BJ (cell line): ENCODE measurements at regions of chr12 and their contacts with region 1.

Region 1: GRCh38 chr12:110301065-110301806 is 20.2 kb downstream of the ATP2A2 start:
- DNase-seq: no peak
- H3K4me3 ChIP-seq: no peak overlapping the region
- H3K27me3 ChIP-seq: no peaks in the 10 kb centered on the region
- CTCF ChIP-seq: no peak

Region 2: GRCh38 chr12:110286623-110287022 is 14.6 kb before region 1 on chr12:
- CTCF ChIA-PET with region 1: interaction called, 3 read pairs
- POLR2A ChIA-PET with region 1: interaction called, 14 read pairs
- DNase-seq: no peak
- H3K4me3 ChIP-seq: no peak overlapping the region
- H3K27me3 ChIP-seq: no peaks in the 10 kb centered on the region
- CTCF ChIP-seq: no peak

Region 3: GRCh38 chr12:111010061-111010460 is 708.8 kb after region 1 on chr12:
- CTCF ChIA-PET with region 1: no interaction called
- POLR2A ChIA-PET with region 1: no interaction called
- DNase-seq: no peak
- H3K4me3 ChIP-seq: no peak overlapping the region
- H3K27me3 ChIP-seq: no peaks in the 10 kb centered on the region
- CTCF ChIP-seq: no peak